GM12878 (cell line): ENCODE measurements at regions of chr5 and their contacts with region 1.

Region 1: GRCh38 chr5:73229209-73229661 is 56.2 kb downstream of the TMEM174 start:
- DNase-seq: no peak
- ATAC-seq: no peak
- H3K4me3 ChIP-seq: no peak overlapping the region
- H3K27ac ChIP-seq: no peak overlapping the region
- H3K4me1 ChIP-seq: no peaks in the 10 kb centered on the region
- H3K27me3 ChIP-seq: peaks cover 12 to 32% of the 10 kb centered on the region in 2 experiments
- CTCF ChIP-seq: no peak
- EP300 ChIP-seq: no peak
- POLR2A ChIP-seq: no peak
- RAD21 ChIP-seq: no peak

Region 2: DNA sequence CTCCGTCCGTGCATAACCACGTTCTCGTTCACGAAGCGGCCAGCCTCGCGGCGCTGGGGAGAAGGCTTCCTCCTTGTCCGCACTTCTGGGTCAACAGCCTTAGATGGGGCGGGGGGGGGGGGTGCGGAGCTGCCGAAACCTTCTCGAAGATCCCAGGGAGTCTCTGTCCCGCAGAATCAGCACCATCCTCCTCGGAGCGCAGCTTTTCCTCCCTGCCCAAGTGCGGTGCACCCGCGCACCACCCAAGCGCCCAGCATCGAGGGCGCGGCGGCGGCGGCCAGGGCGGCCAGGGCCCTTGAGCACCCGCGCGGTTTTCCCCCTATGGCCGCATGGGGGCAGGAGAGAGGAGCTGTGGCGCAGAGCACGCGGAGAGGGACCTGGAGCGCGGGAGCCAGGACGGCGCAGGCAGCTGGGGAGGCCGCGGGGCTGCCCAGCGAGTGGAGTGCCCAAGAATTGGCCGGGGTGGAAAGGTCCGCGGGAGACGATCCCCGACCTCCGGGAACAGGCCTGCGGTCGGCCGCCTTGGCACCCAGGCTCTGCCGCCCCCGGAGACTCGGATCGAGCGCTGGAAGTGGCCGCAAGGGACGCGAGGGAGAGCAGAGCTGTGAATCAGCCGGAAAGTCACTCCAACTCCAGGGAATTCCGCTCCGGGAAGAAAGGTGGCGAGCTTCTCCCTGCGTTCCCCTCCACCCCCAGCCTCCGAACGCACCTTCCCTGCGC is 13.2 kb before region 1 on chr5:
- CTCF ChIA-PET with region 1: interaction called, 13 read pairs
- POLR2A ChIA-PET with region 1: no interaction called
- RAD21 ChIA-PET with region 1: no interaction called
- SMC1A ChIA-PET with region 1: interaction called, 5 read pairs
- in situ Hi-C with region 1: no loop called
- intact Hi-C with region 1: no loop called
- DNase-seq: no peak
- ATAC-seq: peak; percentile 99
- H3K4me3 ChIP-seq: no peak overlapping the region
- H3K27ac ChIP-seq: no peak overlapping the region
- H3K4me1 ChIP-seq: peaks cover 7% of the 10 kb centered on the region
- H3K27me3 ChIP-seq: peaks cover 14 to 16% of the 10 kb centered on the region in 2 experiments
- CTCF ChIP-seq: peak; percentile 55 to 70 (median 56); a peak in 5 of 6 replicates
- EP300 ChIP-seq: no peak
- POLR2A ChIP-seq: no peak
- RAD21 ChIP-seq: peak; percentile 27; the same call in 1 of the 2 replicates